ENCODE measurements at regions of chr9 and their contacts with region 1.

Region 1: DNA sequence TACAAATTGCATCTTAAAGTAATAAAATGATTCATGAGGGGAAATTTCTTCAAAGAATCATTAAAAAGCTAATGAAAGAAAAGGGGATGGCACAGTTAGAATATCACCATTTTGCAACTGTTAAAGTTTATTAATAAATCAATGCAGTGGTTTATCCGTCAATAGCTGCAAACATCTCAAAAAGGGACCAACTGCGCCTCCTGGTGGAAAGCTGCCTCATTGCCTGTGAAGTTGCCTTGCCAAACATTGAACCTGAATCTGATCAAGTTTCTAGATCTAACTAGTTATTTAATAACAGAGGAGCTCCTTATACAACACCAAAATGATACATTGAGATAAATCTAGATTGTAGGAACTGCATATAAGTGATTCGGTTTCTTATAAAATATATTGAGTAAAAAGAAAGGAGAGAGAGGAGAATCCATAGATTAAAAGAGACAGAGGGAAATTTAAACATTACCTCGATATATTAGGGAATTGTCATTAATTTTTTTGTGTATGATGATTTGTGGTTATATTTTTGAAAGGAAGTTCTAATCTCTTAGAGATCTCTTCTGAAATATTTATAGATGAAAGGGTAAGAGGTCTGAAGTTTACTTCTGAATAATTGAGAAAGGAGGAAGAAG is 6.9 kb upstream of the NDUFB6 start:
- DNase-seq: peak; percentile 45
- H3K4me3 ChIP-seq: no peak overlapping the region
- H3K27ac ChIP-seq: no peak overlapping the region
- H3K4me1 ChIP-seq: no peaks in the 10 kb centered on the region; a peak in 1 of 4 replicates
- H3K27me3 ChIP-seq: no peaks in the 10 kb centered on the region
- CTCF ChIP-seq: peak; percentile 98
- EP300 ChIP-seq: no peak
- RAD21 ChIP-seq: peak; percentile 82

Region 2: DNA sequence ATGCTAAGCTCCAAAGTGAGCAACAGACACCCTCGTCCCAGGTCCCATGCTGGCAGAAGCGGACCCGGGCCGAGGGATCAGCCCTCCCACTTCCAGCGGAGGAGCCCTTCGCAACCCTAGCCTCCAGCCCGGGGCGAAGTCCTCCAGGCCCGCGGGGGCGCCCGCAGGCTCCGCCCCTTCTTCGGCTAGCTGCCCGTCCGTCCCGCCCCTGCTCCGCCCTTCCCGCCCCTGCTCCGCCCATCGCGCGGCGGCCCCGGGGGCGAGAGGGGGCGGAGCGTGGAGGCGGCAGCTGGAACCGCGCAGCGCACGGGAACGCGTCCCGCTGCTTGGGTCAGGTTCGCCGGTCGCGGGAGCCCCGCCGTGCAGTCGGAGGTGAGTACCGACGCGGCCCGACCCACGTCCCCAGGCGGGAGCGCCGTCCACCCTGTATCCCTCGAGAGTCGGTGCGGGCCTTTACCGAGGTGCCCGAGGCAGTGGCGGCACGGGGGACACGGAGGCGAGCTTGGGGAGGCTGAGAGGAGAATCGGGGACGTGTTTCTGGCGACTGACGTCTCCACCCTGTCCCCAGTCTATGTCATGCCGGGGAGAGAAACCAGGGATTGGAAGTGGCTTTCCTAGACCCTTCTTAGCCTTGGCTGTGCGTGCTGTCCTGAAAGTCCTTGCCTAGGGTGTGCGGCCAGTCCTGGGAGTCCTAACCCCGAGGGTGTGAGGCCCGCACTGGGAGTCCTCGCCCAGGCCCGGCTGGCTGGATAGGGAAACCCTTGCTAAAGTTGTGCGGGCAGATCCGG is 195.3 kb before region 1 on chr9 and contains the start of gene ACO1:
- CTCF ChIA-PET with region 1: interaction called, 620 read pairs
- POLR2A ChIA-PET with region 1: interaction called, 3 read pairs
- DNase-seq: peak; percentile 97
- H3K4me3 ChIP-seq: peak within 1 kb of the TSS; percentile 88 to 91
- H3K27ac ChIP-seq: peak within 1 kb of the TSS; percentile 50 to 65; a peak in 3 of 4 replicates
- H3K4me1 ChIP-seq: peaks cover 0 to 10% of the 10 kb centered on the region in 2 experiments; a peak in 2 of 4 replicates
- H3K27me3 ChIP-seq: no peaks in the 10 kb centered on the region
- CTCF ChIP-seq: no peak
- EP300 ChIP-seq: no peak
- RAD21 ChIP-seq: no peak
- polyA plus RNA-seq, gene ACO1: 25.4 and 33.7 TPM in 2 replicates

Region 3: DNA sequence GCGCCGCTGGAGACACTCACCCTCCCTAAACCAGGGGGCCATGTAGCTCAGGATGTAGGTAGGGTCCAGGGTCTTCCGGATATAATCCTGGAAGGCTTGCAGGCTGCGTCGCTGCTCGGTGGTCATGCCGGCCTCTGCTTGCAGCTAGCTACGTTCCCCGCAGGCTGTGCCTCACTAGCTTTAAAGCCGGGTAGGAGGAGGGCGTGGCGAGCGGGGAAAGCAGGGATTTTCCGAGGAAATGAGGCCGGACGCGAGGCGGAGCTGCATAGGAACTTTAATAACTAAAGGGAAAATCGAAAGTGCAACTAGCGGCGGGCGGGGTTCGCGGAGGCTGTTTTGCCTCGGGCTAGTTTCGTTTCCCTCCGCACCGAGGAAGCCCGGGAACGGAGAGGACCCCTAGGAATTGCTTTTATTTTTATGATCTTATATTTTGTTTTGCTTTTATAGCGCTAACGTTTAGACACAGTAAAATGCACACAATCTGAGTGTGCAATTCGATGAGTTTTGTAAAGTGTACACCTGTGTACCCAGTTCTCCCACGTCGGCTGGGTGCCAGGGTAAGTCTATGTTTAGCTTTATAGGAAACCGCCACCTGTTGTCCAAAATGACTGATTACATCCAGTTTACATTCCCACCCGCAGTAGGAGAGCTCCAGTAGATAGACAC is 53.6 kb before region 1 on chr9 and contains the start of gene RIGI:
- CTCF ChIA-PET with region 1: interaction called, 29 read pairs
- POLR2A ChIA-PET with region 1: no interaction called
- DNase-seq: peak; percentile 64
- H3K4me3 ChIP-seq: peak within 1 kb of the TSS; percentile 70 to 79
- H3K27ac ChIP-seq: peak within 1 kb of the TSS; percentile 72 to 86
- H3K4me1 ChIP-seq: peaks cover 0 to 7% of the 10 kb centered on the region in 2 experiments; a peak in 3 of 4 replicates
- H3K27me3 ChIP-seq: no peaks in the 10 kb centered on the region
- CTCF ChIP-seq: peak; percentile 65
- EP300 ChIP-seq: no peak
- RAD21 ChIP-seq: peak; percentile 59
- polyA plus RNA-seq, gene RIGI: 1.5 and 2.5 TPM in 2 replicates

Region 4: DNA sequence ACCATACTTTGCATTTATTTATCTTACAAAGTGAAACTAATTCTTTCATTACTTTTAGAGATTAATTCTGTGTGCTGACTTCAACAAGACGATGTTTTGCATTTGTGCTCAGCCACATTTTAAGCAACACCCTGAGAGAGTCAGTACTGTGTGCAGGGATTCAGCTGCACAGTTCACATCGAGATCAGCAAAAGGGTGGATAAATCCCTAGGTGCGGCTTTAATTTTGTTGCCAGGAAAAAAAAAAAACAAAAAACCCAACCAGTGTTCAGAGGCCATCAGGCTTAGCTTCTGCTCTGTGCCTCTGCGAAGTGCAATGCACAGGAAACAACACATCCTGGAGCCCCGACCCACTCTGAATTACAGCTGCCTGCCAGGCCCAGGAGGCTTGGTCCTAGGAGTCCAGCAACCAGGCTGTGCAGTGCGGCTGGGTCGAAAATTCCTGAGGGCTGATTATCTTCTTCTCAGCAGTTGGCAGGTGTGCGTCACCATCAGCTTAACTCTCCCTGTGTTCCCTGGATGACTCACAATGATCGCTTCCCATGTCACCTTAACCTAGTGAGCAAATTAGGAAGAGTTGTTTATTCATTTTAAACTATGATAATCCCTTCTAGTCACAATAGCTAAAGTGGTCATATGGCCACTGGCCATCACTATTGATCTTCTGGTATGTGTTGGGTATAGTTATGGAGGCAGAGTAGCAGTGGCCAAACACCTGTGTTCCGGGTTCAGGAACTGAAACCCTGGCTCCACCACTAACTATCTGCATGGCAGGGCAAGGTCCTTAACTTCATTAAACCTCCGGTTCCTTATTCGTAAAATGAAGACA is 24.3 kb after region 1 on chr9:
- CTCF ChIA-PET with region 1: interaction called, 17 read pairs
- POLR2A ChIA-PET with region 1: no interaction called
- DNase-seq: no peak
- H3K4me3 ChIP-seq: no peak overlapping the region
- H3K27ac ChIP-seq: no peak overlapping the region
- H3K4me1 ChIP-seq: no peaks in the 10 kb centered on the region
- H3K27me3 ChIP-seq: no peaks in the 10 kb centered on the region
- CTCF ChIP-seq: no peak
- EP300 ChIP-seq: no peak
- RAD21 ChIP-seq: no peak

Region 5: GRCh38 chr9:32644698-32645097 is 64.9 kb after region 1 on chr9:
- CTCF ChIA-PET with region 1: no interaction called
- POLR2A ChIA-PET with region 1: no interaction called
- DNase-seq: no peak
- H3K4me3 ChIP-seq: no peak overlapping the region
- H3K27ac ChIP-seq: no peak overlapping the region
- H3K4me1 ChIP-seq: no peaks in the 10 kb centered on the region
- H3K27me3 ChIP-seq: no peaks in the 10 kb centered on the region
- CTCF ChIP-seq: no peak
- EP300 ChIP-seq: no peak
- RAD21 ChIP-seq: no peak

Region 6: GRCh38 chr9:32968101-32969011 is 388.5 kb after region 1 on chr9:
- CTCF ChIA-PET with region 1: interaction called, 195 read pairs
- POLR2A ChIA-PET with region 1: no interaction called
- DNase-seq: peak; percentile 51
- H3K4me3 ChIP-seq: no peak overlapping the region
- H3K27ac ChIP-seq: no peak overlapping the region
- H3K4me1 ChIP-seq: no peaks in the 10 kb centered on the region; a peak in 1 of 4 replicates
- H3K27me3 ChIP-seq: no peaks in the 10 kb centered on the region
- CTCF ChIP-seq: peak; percentile 94
- EP300 ChIP-seq: no peak
- RAD21 ChIP-seq: peak; percentile 87

Measured in SK-N-SH (cell line).